ENCODE measurements at regions of chr10 and their contacts with region 1.

Region 1: GRCh38 chr10:106625751-106626150 is 538.8 kb downstream of the SORCS1 start:
- DNase-seq: no peak
- ATAC-seq: no peak
- H3K4me3 ChIP-seq: no peak overlapping the region
- H3K27ac ChIP-seq: no peak overlapping the region
- H3K4me1 ChIP-seq: no peaks in the 10 kb centered on the region
- H3K27me3 ChIP-seq: no peaks in the 10 kb centered on the region; a peak in 1 of 4 replicates
- CTCF ChIP-seq: no peak
- EP300 ChIP-seq: no peak
- POLR2A ChIP-seq: no peak
- RAD21 ChIP-seq: no peak

Region 2: GRCh38 chr10:106636766-106637491 is 11.2 kb after region 1 on chr10:
- CTCF ChIA-PET with region 1: interaction called, 12 read pairs
- POLR2A ChIA-PET with region 1: no interaction called
- RAD21 ChIA-PET with region 1: interaction called, 3 read pairs
- SMC1A ChIA-PET with region 1: interaction called, 3 read pairs
- in situ Hi-C with region 1: no loop called
- intact Hi-C with region 1: no loop called
- DNase-seq: no peak
- ATAC-seq: no peak
- H3K4me3 ChIP-seq: no peak overlapping the region
- H3K27ac ChIP-seq: no peak overlapping the region
- H3K4me1 ChIP-seq: no peaks in the 10 kb centered on the region
- H3K27me3 ChIP-seq: no peaks in the 10 kb centered on the region
- CTCF ChIP-seq: no peak
- EP300 ChIP-seq: no peak
- POLR2A ChIP-seq: no peak
- RAD21 ChIP-seq: no peak

Region 3: DNA sequence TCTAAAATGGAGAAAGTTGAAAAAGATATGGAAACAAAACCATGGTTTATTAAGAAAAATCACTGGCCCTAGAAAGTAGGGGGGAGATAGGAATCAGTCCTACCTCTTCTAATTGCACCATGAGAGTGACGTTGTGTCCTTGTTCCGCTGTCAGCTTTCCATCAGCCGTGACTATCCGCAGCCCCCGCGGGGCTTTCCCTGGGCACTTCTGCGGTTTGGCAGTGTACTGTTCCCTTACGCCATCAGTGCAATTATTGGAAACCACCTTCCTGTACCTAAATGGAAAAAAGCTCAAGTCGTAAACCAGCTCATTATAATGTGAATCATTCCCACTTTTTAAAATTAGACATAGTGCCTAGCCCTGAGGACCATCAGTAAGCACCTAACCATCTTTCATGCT is 26.5 kb after region 1 on chr10:
- CTCF ChIA-PET with region 1: interaction called, 10 read pairs
- POLR2A ChIA-PET with region 1: no interaction called
- RAD21 ChIA-PET with region 1: interaction called, 5 read pairs
- SMC1A ChIA-PET with region 1: interaction called, 5 read pairs
- in situ Hi-C with region 1: no loop called
- intact Hi-C with region 1: no loop called
- DNase-seq: peak; percentile 11
- ATAC-seq: peak; percentile 73
- H3K4me3 ChIP-seq: no peak overlapping the region
- H3K27ac ChIP-seq: no peak overlapping the region
- H3K4me1 ChIP-seq: no peaks in the 10 kb centered on the region
- H3K27me3 ChIP-seq: no peaks in the 10 kb centered on the region
- CTCF ChIP-seq: no peak
- EP300 ChIP-seq: peak; percentile 70 to 72; a peak in 2 of 4 replicates
- POLR2A ChIP-seq: no peak
- RAD21 ChIP-seq: no peak

Region 4: DNA sequence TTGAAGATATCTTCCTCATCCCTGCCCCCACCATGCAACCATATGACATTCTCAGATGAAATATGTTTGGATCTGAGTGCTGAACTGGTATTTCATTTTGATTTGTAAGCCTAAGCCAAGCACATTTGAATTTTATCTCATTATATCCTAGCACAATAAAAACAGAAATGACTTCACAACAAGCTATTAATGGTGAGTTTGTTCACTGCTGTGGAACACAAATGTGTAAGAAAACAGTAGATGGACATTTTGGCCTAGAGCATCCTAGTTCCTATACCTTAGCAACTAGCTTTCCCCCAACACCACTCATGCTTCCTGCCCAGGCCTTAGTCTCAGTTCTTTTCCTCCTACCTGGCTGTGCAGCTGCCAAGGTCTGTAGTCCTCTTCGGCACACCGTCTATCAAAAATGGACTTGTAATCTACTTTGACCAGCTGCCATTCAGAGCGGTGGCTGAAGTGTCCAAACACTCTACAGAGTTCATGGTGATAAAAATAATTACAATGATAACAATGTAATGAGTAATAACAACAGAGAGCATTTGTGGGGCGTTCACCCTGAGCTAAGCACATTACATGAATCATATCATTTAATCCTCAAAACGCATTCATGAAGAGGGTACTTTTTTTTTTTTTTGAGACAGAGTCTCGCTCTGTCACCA is 46.9 kb after region 1 on chr10:
- CTCF ChIA-PET with region 1: interaction called, 6 read pairs
- POLR2A ChIA-PET with region 1: no interaction called
- RAD21 ChIA-PET with region 1: interaction called, 15 read pairs
- SMC1A ChIA-PET with region 1: interaction called, 8 read pairs
- in situ Hi-C with region 1: no loop called
- intact Hi-C with region 1: no loop called
- DNase-seq: no peak
- ATAC-seq: no peak
- H3K4me3 ChIP-seq: no peak overlapping the region
- H3K27ac ChIP-seq: no peak overlapping the region
- H3K4me1 ChIP-seq: no peaks in the 10 kb centered on the region
- H3K27me3 ChIP-seq: no peaks in the 10 kb centered on the region
- CTCF ChIP-seq: no peak
- EP300 ChIP-seq: no peak
- POLR2A ChIP-seq: no peak
- RAD21 ChIP-seq: no peak

Region 5: DNA sequence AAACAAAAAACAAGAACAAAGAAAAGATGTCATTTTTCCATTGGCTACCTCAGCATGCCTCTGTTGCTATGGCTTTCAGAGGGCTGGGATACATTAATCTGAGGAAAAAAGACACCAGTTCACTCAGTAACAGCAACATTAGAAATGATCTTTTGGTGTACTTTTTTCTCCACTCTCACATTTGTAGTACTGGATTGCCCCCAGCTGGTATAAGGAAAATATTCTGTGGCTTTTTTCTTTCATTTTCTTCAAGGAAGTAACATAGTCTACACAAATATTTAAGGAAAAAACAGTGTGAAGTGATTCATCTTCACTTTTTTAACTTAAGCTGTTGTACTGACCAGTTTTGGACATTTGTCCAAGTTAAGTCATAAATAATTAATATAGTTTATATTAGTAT is 56.4 kb after region 1 on chr10:
- CTCF ChIA-PET with region 1: interaction called, 40 read pairs
- POLR2A ChIA-PET with region 1: no interaction called
- RAD21 ChIA-PET with region 1: interaction called, 3 read pairs
- SMC1A ChIA-PET with region 1: interaction called, 19 read pairs
- in situ Hi-C with region 1: no loop called
- intact Hi-C with region 1: loop called (anchors 5 kb)
- DNase-seq: no peak
- ATAC-seq: 0 out of 3 replicates have a peak, but pooled peaks have one; percentile 18
- H3K4me3 ChIP-seq: no peak overlapping the region
- H3K27ac ChIP-seq: no peak overlapping the region
- H3K4me1 ChIP-seq: no peaks in the 10 kb centered on the region
- H3K27me3 ChIP-seq: no peaks in the 10 kb centered on the region
- CTCF ChIP-seq: no peak; a peak in 1 of 6 replicates
- EP300 ChIP-seq: no peak
- POLR2A ChIP-seq: no peak
- RAD21 ChIP-seq: peak; percentile 59

Region 6: DNA sequence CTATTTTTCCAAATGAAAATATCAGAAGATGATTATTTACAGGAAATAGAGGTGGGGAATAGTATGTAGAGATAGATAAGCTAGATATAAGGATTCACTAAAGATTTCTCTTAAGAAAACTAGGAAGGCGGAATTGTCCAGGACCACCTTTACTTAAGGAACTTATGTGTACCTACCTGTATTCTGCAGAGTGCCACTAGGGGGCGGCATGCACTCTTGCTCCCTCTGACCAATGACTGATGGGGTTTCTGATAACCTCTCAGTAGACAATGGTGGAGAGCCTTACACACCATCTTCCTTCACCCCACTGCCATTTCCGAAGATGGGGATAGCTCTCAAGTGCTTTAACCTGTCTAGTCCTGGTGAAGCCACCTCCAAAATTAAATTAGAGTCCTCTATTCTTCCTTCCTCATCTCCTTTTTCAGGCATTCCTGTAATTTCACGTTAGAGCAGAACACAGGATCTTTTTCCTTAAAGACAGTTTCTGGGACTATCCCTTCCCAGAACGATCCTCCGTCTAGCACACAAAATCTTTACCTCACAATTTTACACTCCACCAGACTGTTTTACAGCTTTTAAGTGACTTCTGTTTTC is 85.7 kb after region 1 on chr10:
- CTCF ChIA-PET with region 1: interaction called, 20 read pairs
- POLR2A ChIA-PET with region 1: no interaction called
- RAD21 ChIA-PET with region 1: interaction called, 3 read pairs
- SMC1A ChIA-PET with region 1: interaction called, 11 read pairs
- in situ Hi-C with region 1: no loop called
- intact Hi-C with region 1: no loop called
- DNase-seq: no peak
- ATAC-seq: peak; percentile 57
- H3K4me3 ChIP-seq: no peak overlapping the region
- H3K27ac ChIP-seq: no peak overlapping the region
- H3K4me1 ChIP-seq: no peaks in the 10 kb centered on the region
- H3K27me3 ChIP-seq: no peaks in the 10 kb centered on the region
- CTCF ChIP-seq: peak; percentile 62 to 87 (median 82)
- EP300 ChIP-seq: no peak
- POLR2A ChIP-seq: no peak
- RAD21 ChIP-seq: peak; percentile 73

Region 7: DNA sequence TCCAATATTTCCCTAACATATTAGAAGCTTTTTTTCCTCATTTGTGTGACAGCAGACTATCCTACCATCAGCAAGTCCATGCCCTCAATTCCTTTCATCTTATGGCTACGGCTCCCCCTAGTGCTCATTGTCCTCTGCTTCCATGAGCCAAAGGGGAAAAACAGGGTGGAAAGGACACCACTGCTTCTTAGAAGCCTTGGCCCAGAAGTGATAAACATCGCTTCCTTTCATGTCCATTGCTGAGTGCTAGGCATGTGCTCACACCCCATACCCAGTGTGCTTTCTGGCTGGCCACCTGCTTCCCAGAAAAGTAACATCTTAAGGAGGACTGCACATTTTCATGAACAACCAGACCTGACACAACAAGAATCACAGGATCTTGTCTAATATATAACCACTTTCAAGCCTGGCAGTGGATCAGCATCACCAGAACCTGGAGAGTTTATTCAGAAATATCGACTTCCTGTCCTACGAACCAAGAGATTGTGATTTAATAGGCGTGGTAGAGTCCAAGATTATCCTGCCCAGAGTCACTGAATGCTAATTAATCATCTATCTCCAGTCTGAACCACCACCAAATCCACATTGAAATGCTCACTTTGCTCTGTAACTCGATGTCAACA is 1189.2 kb after region 1 on chr10:
- CTCF ChIA-PET with region 1: no interaction called
- POLR2A ChIA-PET with region 1: no interaction called
- RAD21 ChIA-PET with region 1: no interaction called
- SMC1A ChIA-PET with region 1: no interaction called
- in situ Hi-C with region 1: no loop called
- intact Hi-C with region 1: loop called (anchors 10 kb)
- DNase-seq: peak; percentile 20
- ATAC-seq: peak; percentile 95
- H3K4me3 ChIP-seq: no peak overlapping the region
- H3K27ac ChIP-seq: no peak overlapping the region
- H3K4me1 ChIP-seq: no peaks in the 10 kb centered on the region
- H3K27me3 ChIP-seq: no peaks in the 10 kb centered on the region
- CTCF ChIP-seq: peak; percentile 59 to 81 (median 74)
- EP300 ChIP-seq: no peak
- POLR2A ChIP-seq: no peak
- RAD21 ChIP-seq: peak; percentile 87

Measured in GM12878 (cell line).